ENCODE measurements at regions of chr6 and their contacts with region 1.

Region 1: DNA sequence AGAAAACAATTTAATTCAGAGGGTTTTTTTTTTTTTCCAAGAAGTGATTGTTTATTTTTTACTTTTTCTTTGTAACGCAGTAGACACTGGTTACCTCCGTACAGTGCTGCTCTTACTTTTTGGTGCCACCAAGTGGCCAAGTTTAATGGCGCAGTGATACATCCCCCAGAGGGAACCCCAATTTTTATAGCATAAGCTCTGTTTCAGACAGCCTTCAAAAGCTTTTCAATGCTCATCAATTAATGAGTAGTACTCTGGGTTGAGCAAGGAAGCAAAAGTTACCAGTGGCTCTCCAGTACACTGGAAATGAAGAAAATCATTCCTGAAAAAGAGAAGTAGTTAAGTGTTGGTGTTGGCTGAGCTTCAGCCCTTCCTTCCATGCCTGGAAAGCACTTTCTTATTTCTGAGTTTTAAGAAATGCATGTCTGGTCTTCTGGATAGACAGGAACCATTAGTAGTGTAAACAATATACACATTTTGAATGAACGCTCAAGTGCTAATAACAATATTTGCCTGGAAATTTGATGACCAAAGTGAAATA is 129.1 kb upstream of the SMLR1 start:
- DNase-seq: peak; percentile 46
- H3K4me3 Mint-ChIP-seq: no peak overlapping the region
- H3K27ac Mint-ChIP-seq: no peak overlapping the region
- H3K4me1 Mint-ChIP-seq: no peaks in the 10 kb centered on the region
- H3K27me3 Mint-ChIP-seq: peaks cover 47% of the 10 kb centered on the region
- CTCF ChIP-seq: peak; percentile 63

Region 2: DNA sequence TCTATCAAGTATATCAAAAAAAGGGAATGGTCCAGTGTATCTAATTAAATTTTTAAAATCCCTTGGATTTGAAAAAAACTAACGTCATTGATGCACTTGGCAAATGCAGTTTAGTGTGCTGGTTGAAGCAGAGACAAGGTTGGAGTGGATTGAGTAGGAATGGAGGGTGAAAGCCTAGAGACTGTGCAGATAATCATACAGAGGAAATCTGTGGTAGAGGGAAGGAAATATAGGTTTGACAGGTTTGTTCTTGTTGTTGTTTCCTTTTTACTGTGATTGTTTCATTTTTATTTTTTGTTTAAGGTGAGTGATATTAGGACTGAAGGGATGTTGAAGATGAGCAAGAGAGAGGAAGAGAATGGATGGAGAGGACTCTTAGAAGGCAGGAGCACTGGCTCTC is 708.7 kb before region 1 on chr6:
- CTCF ChIA-PET with region 1: no interaction called
- intact Hi-C with region 1: no loop called
- DNase-seq: no peak
- H3K4me3 Mint-ChIP-seq: no peak overlapping the region
- H3K27ac Mint-ChIP-seq: no peak overlapping the region
- H3K4me1 Mint-ChIP-seq: no peaks in the 10 kb centered on the region
- H3K27me3 Mint-ChIP-seq: peaks cover 14% of the 10 kb centered on the region
- CTCF ChIP-seq: no peak

Region 3: GRCh38 chr6:130047088-130047995 is 650.7 kb before region 1 on chr6:
- CTCF ChIA-PET with region 1: no interaction called
- intact Hi-C with region 1: loop called (anchors 5 kb)
- DNase-seq: no peak
- H3K4me3 Mint-ChIP-seq: no peak overlapping the region
- H3K27ac Mint-ChIP-seq: no peak overlapping the region
- H3K4me1 Mint-ChIP-seq: no peaks in the 10 kb centered on the region
- H3K27me3 Mint-ChIP-seq: no peaks in the 10 kb centered on the region
- CTCF ChIP-seq: no peak

Region 4: DNA sequence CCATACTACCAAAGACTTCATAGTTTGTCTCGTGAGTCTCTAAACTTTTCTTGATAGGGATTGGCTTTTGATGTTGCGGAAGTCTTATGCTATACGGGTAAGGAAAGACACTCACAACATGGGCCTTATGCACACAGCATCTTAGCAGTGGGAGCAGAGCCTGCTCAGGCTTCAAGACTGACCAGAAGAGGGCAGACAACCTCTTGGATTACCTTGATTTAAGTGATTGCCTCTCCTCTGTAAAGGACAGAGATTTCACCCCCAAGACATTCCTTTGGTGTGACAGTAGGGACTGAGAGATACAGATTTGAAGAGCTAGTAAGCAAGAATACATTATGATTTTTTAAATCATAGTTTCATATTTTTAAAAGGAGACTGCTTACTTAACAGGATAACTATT is 404.3 kb before region 1 on chr6:
- CTCF ChIA-PET with region 1: interaction called, 11 read pairs
- intact Hi-C with region 1: loop called (anchors 5 kb)
- DNase-seq: peak; percentile 40
- H3K4me3 Mint-ChIP-seq: no peak overlapping the region
- H3K27ac Mint-ChIP-seq: no peak overlapping the region
- H3K4me1 Mint-ChIP-seq: no peaks in the 10 kb centered on the region
- H3K27me3 Mint-ChIP-seq: peaks cover 24% of the 10 kb centered on the region
- CTCF ChIP-seq: no peak

Region 5: DNA sequence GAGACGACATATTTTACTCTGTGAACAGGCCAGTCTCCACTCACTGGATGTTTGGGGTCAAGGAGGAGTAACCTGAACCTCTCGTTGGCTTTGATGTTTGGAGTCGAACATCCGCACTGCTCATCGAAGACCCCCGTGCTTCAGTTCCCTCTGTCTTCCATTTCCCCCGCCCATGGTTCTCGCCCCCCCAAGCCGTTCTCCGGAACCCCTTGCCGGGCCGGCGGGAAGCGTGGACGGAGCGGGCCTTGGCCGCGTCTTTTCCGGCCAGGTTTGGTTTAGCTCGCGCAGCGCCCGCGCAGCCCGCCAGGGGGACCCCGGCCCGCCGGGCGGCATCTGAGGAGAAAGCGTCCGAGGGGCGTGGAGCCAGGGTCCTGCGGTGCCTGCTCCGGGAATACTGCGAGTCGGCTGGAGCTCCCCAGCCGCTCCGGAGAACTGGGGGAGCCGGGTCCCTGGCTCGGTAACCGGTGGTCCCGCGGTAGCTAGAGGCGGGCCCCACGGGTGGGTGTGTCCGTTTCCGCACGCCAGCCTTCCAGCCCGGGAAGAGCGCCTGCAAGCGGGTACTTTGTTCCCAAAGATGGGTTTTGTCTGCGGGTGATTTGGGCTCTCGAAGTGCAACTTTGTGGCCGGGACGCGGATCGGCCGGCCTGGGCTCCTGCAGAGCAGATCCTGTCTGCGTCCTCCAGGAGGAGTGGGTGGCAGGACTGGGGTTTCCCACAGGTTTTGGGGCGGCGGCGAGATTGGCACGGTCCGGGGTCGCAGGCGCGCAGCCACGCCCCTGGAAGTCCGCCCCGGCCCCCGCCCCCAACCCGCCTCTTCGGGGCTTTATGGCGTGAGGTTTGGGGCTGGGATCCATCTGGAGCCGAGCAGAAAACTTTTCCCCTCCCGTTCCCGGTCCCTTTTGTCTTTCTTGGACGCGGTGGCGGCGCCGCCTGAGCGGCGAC is 332.6 kb before region 1 on chr6 and contains the start of gene TMEM200A:
- CTCF ChIA-PET with region 1: interaction called, 4 read pairs
- intact Hi-C with region 1: loop called (anchors 5 kb)
- DNase-seq: peak; percentile 54
- H3K4me3 Mint-ChIP-seq: peak within 1 kb of the TSS; percentile 62
- H3K27ac Mint-ChIP-seq: no peak within 1 kb of the TSS
- H3K4me1 Mint-ChIP-seq: no peaks in the 10 kb centered on the region
- H3K27me3 Mint-ChIP-seq: peaks cover 79% of the 10 kb centered on the region
- CTCF ChIP-seq: peak; percentile 56
- total RNA-seq, gene TMEM200A: not detected in 2 replicates

Measured in Calu3 (cell line).